Dendritic cell treated with granulocyte-macrophage colony-stimulating factor and Interleukin-4, amounts not matched to agents 40 ng/mL and 50 ng/mL, for 4 days (primary cell): ENCODE measurements at regions of chr11 and their contacts with region 1.

Region 1: GRCh38 chr11:35214792-35215193 is 75.8 kb downstream of the CD44 start:
- H3K4me3 Mint-ChIP-seq: peak overlapping the region; percentile 23
- H3K27ac Mint-ChIP-seq: peak overlapping the region; percentile 97
- H3K4me1 Mint-ChIP-seq: peaks cover 68% of the 10 kb centered on the region
- H3K27me3 Mint-ChIP-seq: no peaks in the 10 kb centered on the region

Region 2: DNA sequence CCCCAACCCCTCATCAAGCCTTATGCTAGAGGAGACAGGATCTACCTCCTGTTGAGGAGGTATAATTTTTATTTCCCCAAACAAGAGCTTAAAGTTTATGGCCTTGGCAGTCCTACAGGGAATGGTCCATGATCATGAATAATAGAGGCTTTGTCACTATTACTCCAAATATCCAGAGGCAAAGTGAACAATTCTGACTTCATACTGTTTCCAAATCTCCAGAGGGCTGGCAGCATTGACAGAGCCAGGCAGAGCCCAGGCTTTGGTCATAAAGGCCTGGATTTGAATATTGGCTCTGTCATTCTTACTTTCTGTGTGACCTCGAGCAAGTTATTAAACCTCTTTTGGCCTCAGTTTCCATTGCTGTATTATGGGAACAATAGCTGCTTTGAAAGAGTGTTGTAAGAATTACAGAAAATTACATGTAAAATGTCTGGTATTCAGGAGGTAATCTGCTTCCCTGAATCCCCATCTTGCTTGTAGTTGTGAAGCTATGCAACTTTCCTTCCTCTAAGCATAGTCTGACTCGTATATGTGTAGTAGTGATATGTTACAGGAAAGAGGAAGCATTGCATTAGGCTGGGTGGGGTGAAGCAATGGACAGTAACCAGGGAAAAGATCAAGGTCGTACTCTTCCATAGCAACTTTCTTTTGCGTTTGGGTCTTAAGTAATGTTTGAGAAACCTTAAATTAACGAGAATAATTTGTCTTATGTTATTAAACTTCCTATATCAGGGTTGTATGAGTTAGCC is 13.0 kb after region 1 on chr11:
- intact Hi-C with region 1: loop called (anchors 1 kb)
- H3K4me3 Mint-ChIP-seq: no peak overlapping the region
- H3K27ac Mint-ChIP-seq: peak overlapping the region; percentile 90
- H3K4me1 Mint-ChIP-seq: peaks cover 82% of the 10 kb centered on the region
- H3K27me3 Mint-ChIP-seq: no peaks in the 10 kb centered on the region

Region 3: GRCh38 chr11:35304386-35304775 is 89.6 kb after region 1 on chr11:
- intact Hi-C with region 1: loop called (anchors 1 kb)
- H3K4me3 Mint-ChIP-seq: no peak overlapping the region
- H3K27ac Mint-ChIP-seq: peak overlapping the region; percentile 91
- H3K4me1 Mint-ChIP-seq: peaks cover 88% of the 10 kb centered on the region
- H3K27me3 Mint-ChIP-seq: no peaks in the 10 kb centered on the region